ENCODE measurements at regions of chr1 and their contacts with region 1.

Region 1: DNA sequence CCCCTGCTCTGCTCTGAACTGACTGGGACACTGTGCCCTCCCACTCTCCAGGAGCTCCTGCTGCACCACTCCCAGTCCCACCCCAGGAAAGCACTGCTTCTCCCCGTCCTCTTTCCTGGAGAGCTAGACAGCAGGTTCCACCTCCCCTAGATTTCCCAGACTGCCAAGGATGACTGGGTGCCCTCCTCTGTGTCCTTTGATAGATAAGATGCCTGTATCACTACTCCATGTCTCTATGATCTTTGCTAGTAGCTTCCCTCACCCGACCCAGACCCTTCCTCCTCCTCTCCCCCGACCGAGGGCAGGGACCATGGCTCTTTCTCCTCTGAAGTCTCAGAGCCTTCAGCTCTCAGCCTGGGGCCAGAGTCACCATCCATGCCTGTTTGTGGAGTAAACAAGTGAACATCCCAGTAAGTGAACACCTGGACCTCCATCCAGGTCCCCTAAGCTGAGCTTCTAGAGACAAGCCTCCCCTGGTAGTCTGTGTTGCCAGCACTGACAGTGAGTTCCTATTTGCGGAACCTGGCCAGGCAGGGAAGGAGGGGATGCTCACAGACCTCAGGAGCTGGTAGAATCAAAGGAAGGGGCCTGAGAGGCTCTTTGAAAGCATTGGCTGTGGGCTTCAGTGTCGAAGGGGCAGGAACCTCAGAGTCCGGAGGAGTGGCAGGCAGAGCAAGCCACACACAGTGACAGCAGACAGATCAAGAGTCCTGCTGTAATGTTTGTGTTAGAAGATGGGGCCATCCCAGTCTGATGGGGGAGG is 104.0 kb downstream of the PAX7 start:
- DNase-seq: no peak
- ATAC-seq: peak; percentile 27; the same call in 1 of the 2 replicates
- H3K4me3 ChIP-seq: no peak overlapping the region
- H3K27ac ChIP-seq: no peak overlapping the region
- H3K4me1 ChIP-seq: no peaks in the 10 kb centered on the region
- H3K27me3 ChIP-seq: no peaks in the 10 kb centered on the region
- CTCF ChIP-seq: no peak

Region 2: DNA sequence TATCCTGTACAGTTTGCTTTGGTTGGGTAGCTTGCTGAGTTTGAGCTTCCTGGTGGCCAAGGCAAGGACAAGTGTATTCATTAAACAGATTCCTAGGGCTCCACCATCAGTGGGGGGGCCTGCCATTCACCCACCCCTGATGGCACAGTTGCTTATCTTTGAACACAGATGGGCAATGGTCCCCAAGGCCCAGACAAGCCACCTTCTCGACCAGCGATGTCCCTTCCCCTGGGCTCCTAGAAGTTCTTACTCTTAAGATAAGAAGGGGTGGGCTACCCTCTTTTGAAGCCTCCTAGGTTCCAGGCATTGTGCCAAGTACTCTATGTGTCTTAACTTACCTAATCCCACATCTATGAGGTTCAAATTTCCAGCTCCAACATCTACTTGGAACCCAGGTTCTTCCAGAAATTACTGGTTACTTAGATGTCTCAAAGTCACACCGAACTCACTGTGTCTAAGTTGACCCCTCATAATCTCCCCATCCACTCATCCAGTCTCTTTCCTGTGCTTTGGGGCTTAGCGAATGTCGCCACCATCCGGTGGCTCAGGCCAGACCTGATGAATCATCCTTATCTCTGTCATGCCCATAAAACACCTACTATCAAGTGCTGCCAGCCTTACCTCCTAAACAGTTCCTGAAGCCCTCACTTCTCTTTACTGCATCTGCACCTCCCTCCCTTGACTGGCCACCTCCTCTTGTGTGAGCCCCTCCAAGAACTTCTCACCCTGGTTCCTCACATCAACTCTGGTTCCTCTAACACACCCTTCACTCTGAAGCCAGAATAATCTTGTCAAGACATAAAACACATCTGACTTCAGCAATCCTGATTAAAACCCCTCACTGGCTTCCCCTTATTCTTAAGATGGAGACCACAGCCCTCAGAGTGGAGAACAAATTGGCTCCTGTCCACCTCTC is 203.8 kb before region 1 on chr1:
- CTCF ChIA-PET with region 1: interaction called, 10 read pairs
- POLR2A ChIA-PET with region 1: no interaction called
- in situ Hi-C with region 1: no loop called
- intact Hi-C with region 1: no loop called
- DNase-seq: peak; percentile 4
- ATAC-seq: no peak
- H3K4me3 ChIP-seq: no peak overlapping the region
- H3K27ac ChIP-seq: no peak overlapping the region
- H3K4me1 ChIP-seq: no peaks in the 10 kb centered on the region
- H3K27me3 ChIP-seq: peaks cover 38% of the 10 kb centered on the region
- CTCF ChIP-seq: no peak

Region 3: GRCh38 chr1:18723701-18724411 is 10.8 kb before region 1 on chr1:
- CTCF ChIA-PET with region 1: no interaction called
- POLR2A ChIA-PET with region 1: no interaction called
- in situ Hi-C with region 1: no loop called
- intact Hi-C with region 1: no loop called
- DNase-seq: no peak
- ATAC-seq: no peak
- H3K4me3 ChIP-seq: no peak overlapping the region
- H3K27ac ChIP-seq: no peak overlapping the region
- H3K4me1 ChIP-seq: no peaks in the 10 kb centered on the region
- H3K27me3 ChIP-seq: no peaks in the 10 kb centered on the region; the same call in 1 of the 2 replicates
- CTCF ChIP-seq: no peak

Measured in Panc1 (cell line).